Lower leg skin (tissue), 4 donors: ENCODE measurements at regions of chr18 and their contacts with region 1.

Region 1: GRCh38 chr18:21004726-21005125 is 106.9 kb downstream of the ROCK1 start:
- DNase-seq: peak in 1 of 2 donors; percentile 16
- H3K4me3 ChIP-seq: no peak overlapping the region
- CTCF ChIP-seq: no peak
- POLR2A ChIP-seq: no peak

Region 2: DNA sequence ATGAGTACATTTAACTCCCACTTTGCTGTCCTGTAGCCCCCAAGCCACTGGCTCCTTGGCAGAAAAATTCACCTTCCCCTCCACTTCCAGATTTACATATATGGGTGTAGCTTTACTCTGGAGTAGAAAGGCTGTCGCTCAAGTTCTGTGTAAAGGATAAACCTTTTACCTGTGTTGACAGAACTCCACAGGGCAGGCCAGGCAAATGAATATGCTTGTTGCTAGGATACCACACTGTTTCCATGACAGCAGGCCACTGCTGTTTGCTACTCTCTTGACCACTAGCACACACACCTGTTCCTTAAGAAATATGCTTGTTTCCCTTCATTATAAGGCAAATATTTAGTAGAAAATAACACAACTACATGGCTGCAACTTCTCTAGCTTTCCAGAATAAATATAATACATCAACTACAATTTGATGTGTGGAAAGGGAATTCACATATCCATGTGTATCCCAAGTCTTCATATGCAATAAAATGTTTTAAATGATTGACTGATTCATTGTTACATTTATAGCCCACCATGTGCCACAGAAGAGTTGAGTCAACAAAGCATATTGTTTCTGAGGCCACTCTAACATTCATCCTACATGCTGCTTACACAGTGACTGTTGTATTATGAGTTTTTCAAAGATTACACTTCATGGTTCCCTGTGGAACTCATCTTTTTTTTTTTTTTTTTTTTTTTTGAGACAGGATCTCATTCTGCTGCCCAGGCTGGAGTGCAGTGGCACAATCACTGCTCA is 163.1 kb after region 1 on chr18:
- intact Hi-C with region 1: no loop called
- DNase-seq: no peak
- H3K4me3 ChIP-seq: no peak overlapping the region
- CTCF ChIP-seq: no peak
- POLR2A ChIP-seq: no peak

Region 3: DNA sequence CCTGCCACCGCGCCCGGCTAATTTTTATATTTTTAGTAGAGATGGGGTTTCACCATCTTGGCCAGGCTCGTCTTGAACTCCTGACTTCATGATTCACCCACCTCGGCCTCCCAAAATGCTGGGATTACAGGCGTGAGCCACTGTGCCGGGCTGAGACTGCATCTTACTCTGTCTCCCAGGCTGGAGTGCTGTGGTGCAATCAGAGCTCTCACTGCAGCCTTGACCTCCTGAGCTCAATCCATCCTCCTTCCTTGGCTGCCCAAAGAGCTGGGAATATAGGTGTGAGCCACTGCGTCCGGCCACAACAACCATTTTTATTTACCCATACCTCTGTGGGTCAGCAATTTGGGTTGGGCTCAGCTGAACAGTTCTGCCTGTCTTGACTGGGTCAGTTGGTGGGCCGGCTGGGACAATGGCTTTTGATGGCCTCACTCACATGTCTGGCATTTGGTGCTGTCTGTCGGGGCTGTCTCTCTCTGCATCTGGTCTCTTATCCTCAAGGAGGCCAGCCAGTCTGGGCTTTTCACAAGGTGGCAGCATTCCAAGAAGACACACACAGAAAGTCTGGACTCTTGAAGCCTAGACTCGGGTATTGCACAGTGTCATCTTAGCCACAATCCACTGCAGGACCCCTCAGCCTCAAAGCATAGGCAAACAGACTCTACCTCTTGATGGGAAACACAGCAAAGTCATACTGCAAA is 1047.8 kb after region 1 on chr18:
- intact Hi-C with region 1: loop called (anchors 10 kb)
- DNase-seq: no peak
- H3K4me3 ChIP-seq: no peak overlapping the region
- CTCF ChIP-seq: no peak
- POLR2A ChIP-seq: no peak